Upper lobe of right lung (tissue), 1 donor: ENCODE measurements at regions of chr20 and their contacts with region 1.

Region 1: DNA sequence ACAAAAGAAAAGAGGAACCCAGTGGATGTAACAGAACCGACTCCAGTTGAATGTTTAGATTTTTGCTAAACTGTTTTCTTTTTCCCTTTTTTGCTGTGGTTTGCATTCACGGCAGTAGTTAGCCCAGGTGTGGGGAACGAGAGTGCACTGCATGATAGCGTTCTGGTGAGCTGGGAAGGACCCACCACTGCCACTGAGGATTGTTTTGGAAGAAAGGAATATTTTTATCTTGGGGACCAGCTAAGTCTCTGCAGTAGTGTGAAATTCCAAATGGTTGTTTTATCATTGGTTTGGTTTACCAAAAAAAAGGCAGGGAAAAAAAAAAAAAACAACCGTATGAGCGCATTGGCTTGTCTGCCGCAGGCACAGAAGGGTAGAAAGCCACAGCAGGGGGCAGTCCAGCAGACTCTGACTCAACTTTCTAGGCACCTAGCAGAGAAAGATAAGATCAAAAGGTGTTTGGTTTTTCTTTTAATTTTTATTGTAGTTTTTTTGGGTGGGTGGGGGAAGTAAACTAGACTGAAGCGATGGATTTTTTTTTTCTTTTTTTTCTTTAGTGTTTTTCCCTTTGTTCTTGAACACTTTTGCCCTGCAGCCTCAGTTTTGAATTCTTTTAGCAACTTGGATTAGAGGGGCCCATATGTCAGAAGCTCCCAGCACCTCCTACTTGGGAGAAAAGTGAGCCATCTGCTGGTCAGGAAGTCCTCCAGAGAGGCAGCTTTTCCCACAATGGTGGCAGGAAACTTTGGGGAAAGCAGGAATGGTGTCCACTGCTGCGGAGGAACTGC is 13.5 kb upstream of the RAB5IF start:
- DNase-seq: no peak
- ATAC-seq: no peak
- H3K4me3 ChIP-seq: no peak overlapping the region
- H3K27ac ChIP-seq: no peak overlapping the region
- H3K4me1 ChIP-seq: peaks cover 3% of the 10 kb centered on the region
- H3K27me3 ChIP-seq: no peaks in the 10 kb centered on the region
- CTCF ChIP-seq: peak; percentile 38

Region 2: GRCh38 chr20:36555248-36555647 is 36.8 kb before region 1 on chr20:
- intact Hi-C with region 1: loop called (anchors 5 kb)
- DNase-seq: no peak
- ATAC-seq: no peak
- H3K4me3 ChIP-seq: no peak overlapping the region
- H3K27ac ChIP-seq: no peak overlapping the region
- H3K4me1 ChIP-seq: peaks cover 5% of the 10 kb centered on the region
- H3K27me3 ChIP-seq: no peaks in the 10 kb centered on the region
- CTCF ChIP-seq: no peak